Transverse colon (tissue), 4 donors: ENCODE measurements at regions of chr15 and their contacts with region 1.

Region 1: DNA sequence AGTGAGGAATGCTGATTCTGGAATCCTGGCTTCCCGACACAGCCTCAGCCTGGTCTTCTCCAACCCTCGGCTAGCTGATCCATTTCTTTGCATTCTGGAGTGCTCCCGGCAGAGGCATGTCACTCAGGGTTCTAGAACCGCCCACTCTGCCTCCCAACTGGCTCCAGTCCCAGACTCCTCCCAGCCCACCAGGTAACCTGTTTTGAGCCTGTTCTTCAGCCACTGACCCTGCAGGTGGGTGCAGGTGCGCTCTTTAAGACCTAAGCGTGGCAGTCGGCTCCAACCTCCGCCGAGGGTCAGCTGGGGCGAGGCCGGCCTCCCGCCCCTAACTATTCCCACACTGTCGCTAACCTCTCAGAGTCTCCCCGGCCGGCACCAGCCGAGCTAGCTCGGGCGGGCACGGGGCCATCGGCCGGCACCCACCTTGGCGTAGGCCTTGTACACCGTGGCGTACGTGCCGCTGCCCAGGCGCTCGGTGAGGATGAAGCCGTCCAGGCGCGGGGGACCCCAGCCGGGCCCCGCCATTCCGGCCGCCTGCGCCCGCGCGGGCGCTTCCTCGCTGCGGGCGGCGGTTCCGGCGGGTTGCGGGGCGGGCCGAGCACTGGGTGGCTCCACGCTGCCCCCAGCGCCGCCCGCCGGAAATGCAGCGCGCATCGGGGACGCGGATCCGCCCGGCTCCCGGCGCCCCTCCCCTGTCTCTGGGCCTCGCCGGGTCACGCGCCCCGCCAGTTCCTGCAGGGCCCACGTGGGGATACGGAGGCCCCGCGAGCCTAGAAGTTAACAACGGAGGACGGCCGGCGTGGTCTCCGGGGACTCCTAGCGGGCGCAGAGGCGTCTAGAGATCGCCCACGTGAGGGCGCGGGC is at the start of gene ULK3:
- DNase-seq: peak; percentile 93
- H3K4me3 ChIP-seq: peak within 1 kb of the TSS; percentile 71 to 90 (median 77)
- H3K27ac ChIP-seq: peak within 1 kb of the TSS; percentile 87 to 95 (median 92)
- H3K4me1 ChIP-seq: peaks cover 19 to 30% (median 25%) of the 10 kb centered on the region in 4 donors
- H3K27me3 ChIP-seq: no peaks in the 10 kb centered on the region
- CTCF ChIP-seq: peak; percentile 68 to 84 (median 73)
- EP300 ChIP-seq: no peak
- POLR2A ChIP-seq: peak; percentile 74
- total RNA-seq, gene ULK3: 138 to 473 (median 312) TPM

Region 2: DNA sequence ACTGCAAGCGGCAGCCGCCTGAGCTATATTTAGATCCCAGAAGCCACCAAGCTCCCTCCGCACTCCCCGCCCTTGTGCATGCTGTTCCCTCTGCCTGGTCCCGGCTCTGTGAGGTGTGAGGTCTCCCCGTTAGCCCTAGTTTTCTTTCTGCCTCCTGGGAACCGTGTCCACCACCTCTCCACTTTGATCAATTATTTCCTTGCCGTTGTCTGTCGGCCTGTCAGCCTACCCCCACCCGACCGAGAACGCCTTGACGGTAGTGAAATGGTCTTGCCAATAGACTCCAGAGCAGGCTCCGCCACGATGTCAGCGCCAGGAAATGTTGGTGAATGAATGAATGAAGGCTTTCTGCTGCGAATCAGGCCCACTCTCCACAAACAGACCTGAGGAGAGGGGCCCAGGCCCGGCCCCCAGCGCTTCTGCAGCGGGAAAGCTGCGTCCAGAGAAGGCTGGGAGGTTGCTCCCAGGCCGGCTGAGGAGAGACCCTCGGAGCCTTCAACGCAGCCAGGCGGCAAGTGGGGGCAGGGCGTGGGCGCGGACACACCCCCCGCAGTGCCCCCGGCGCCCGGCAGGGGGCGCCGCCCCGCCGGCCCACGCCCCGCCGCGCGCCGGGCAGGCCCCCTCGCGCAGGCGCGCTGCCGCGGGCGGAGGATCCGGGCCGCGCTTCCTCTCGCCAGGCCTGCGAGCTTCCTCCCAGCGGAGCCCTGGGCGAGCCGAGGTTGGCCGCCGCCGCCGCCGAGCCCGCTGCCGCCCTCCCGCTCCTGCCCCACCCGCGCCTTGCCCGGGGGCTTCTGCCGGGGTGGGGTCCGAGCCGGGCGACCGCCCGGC is 61.2 kb before region 1 on chr15 and contains the start of gene CSK:
- in situ Hi-C with region 1: no loop called
- intact Hi-C with region 1: loop called (anchors 5 kb)
- DNase-seq: peak; percentile 81
- H3K4me3 ChIP-seq: peak within 1 kb of the TSS; percentile 60 to 93 (median 75)
- H3K27ac ChIP-seq: peak within 1 kb of the TSS; percentile 84 to 92 (median 86)
- H3K4me1 ChIP-seq: peaks cover 41 to 91% (median 71%) of the 10 kb centered on the region in 4 donors
- H3K27me3 ChIP-seq: no peaks in the 10 kb centered on the region
- CTCF ChIP-seq: peak; percentile 53 to 63 (median 60)
- EP300 ChIP-seq: no peak
- POLR2A ChIP-seq: no peak
- total RNA-seq, gene CSK: 59.7 to 176 (median 73.4) TPM

Region 3: GRCh38 chr15:74956648-74957300 is 114.0 kb after region 1 on chr15 and contains the start of gene RPP25:
- in situ Hi-C with region 1: no loop called
- intact Hi-C with region 1: loop called (anchors 10 kb)
- DNase-seq: peak; percentile 91
- H3K4me3 ChIP-seq: peak within 1 kb of the TSS; percentile 48 to 63 (median 57)
- H3K27ac ChIP-seq: peak within 1 kb of the TSS; percentile 86 to 93 (median 90)
- H3K4me1 ChIP-seq: peaks cover 19 to 68% (median 49%) of the 10 kb centered on the region in 4 donors
- H3K27me3 ChIP-seq: peaks cover 24% of the 10 kb centered on the region
- CTCF ChIP-seq: no peak
- EP300 ChIP-seq: no peak
- POLR2A ChIP-seq: peak; percentile 82
- total RNA-seq, gene RPP25: 10.1 to 28.4 (median 16.5) TPM